Activated CD4-positive, alpha-beta memory T cell treated with anti-CD3 and anti-CD28 coated beads for 36 hours (primary cell): ENCODE measurements at regions of chr3 and their contacts with region 1.

Region 1: GRCh38 chr3:177197041-177197727 is at the start of gene TBL1XR1:
- DNase-seq: peak; percentile 89
- H3K4me3 Mint-ChIP-seq: peak within 1 kb of the TSS; percentile 90
- H3K27ac Mint-ChIP-seq: peak within 1 kb of the TSS; percentile 99
- H3K4me1 Mint-ChIP-seq: peaks cover 51% of the 10 kb centered on the region
- H3K27me3 Mint-ChIP-seq: no peaks in the 10 kb centered on the region
- total RNA-seq, gene TBL1XR1: 158 to 167 TPM

Region 2: DNA sequence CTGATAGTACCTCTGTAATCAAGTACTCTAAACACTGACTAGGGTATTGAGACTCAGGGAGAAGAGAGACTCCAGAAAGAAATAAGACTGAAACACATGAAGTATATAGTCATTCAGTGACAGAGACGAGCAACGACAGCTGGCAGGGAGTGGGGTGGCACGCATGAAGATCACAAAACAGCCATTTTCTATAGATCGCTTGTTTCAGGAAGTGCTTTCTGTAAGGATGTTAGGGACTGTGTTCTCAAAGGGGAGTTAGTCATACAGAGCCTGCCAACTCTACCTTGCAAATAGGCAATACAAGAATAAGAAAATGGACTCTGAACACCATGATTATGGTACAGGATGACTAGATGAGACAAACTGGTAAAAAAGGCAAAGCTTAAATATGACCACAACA is 139.4 kb before region 1 on chr3:
- CTCF ChIA-PET with region 1: no interaction called
- POLR2A ChIA-PET with region 1: interaction called, 6 read pairs
- intact Hi-C with region 1: loop called (anchors 1 kb)
- DNase-seq: peak; percentile 80
- H3K4me3 Mint-ChIP-seq: no peak overlapping the region
- H3K27ac Mint-ChIP-seq: no peak overlapping the region
- H3K4me1 Mint-ChIP-seq: peaks cover 39% of the 10 kb centered on the region
- H3K27me3 Mint-ChIP-seq: no peaks in the 10 kb centered on the region

Region 3: DNA sequence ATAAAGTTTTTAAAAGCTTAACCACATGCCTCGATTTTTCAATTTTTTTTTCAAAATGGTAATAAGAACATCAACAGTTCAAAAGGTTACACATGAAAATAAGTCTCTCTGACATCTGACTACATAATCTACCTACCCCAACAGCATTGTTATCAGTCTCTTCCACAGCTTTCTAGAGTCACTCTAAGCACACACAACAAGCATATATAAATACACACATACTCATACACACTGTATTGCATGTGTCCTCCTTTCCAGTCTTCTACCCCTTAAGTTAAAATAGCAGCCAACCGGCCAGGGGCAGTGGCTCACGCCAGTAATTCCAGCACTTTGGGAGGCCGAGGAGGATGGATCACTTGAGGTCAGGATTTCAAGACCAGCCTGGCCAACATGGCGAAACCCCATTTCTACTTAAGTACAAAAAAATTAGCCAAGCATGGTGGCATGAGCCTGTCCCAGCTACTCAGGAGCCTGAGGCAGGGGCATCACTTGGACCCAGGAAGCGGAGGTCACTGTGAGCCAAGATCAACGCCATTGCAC is 12.1 kb before region 1 on chr3:
- CTCF ChIA-PET with region 1: interaction called, 5 read pairs
- POLR2A ChIA-PET with region 1: interaction called, 5 read pairs
- intact Hi-C with region 1: loop called (anchors 1 kb)
- DNase-seq: no peak
- H3K4me3 Mint-ChIP-seq: no peak overlapping the region
- H3K27ac Mint-ChIP-seq: peak overlapping the region; percentile 35
- H3K4me1 Mint-ChIP-seq: peaks cover 62% of the 10 kb centered on the region
- H3K27me3 Mint-ChIP-seq: no peaks in the 10 kb centered on the region

Region 4: DNA sequence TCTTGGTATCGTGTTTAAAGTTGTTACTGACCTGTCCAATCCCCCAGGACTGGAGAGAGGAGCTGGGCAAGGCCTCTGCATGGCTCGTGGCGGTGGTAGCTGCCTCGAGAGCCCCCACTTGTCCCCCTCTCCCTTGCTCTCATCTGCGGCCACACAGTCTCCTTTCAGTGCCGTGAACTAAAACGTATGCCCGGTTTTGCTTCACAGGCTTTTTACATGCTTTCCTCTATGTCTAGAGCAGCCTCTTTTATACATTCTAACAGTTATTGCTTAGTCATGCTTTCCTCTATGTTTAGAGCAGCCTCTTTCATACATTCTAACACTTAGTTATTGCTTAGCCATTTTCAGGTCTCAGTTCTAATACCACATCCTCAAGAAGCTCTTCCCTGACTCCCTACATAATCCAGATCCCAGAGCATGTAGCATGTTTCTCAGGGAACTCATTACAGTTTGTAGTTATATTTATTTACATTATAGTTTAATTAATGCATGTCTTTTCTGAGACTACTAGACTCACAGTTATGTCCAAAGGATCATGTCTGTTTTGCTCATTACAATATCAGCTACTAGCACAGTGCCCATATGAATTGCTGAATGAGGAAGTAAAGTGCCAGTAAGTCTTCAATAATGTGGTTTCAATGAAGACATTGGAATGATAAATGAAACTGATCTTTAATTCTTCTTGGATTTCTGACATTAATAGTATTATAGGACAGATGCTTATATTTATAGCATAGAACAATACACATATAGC is 66.6 kb after region 1 on chr3:
- CTCF ChIA-PET with region 1: no interaction called
- POLR2A ChIA-PET with region 1: no interaction called
- intact Hi-C with region 1: no loop called
- DNase-seq: no peak
- H3K4me3 Mint-ChIP-seq: no peak overlapping the region
- H3K27ac Mint-ChIP-seq: no peak overlapping the region
- H3K4me1 Mint-ChIP-seq: no peaks in the 10 kb centered on the region
- H3K27me3 Mint-ChIP-seq: no peaks in the 10 kb centered on the region

Region 5: GRCh38 chr3:177314897-177315296 is 117.7 kb after region 1 on chr3:
- CTCF ChIA-PET with region 1: interaction called, 3 read pairs
- POLR2A ChIA-PET with region 1: interaction called, 4 read pairs
- intact Hi-C with region 1: loop called (anchors 2 kb)
- DNase-seq: peak; percentile 13
- H3K4me3 Mint-ChIP-seq: no peak overlapping the region
- H3K27ac Mint-ChIP-seq: peak overlapping the region; percentile 18
- H3K4me1 Mint-ChIP-seq: peaks cover 23% of the 10 kb centered on the region
- H3K27me3 Mint-ChIP-seq: peaks cover 2% of the 10 kb centered on the region

Region 6: GRCh38 chr3:177345049-177345972 is 148.1 kb after region 1 on chr3:
- CTCF ChIA-PET with region 1: interaction called, 4 read pairs
- POLR2A ChIA-PET with region 1: interaction called, 7 read pairs
- intact Hi-C with region 1: loop called (anchors 1 kb)
- DNase-seq: peak; percentile 86
- H3K4me3 Mint-ChIP-seq: peak overlapping the region; percentile 20
- H3K27ac Mint-ChIP-seq: peak overlapping the region; percentile 90
- H3K4me1 Mint-ChIP-seq: peaks cover 40% of the 10 kb centered on the region
- H3K27me3 Mint-ChIP-seq: no peaks in the 10 kb centered on the region

Region 7: GRCh38 chr3:177679568-177680441 is 482.6 kb after region 1 on chr3:
- CTCF ChIA-PET with region 1: no interaction called
- POLR2A ChIA-PET with region 1: no interaction called
- intact Hi-C with region 1: loop called (anchors 5 kb)
- DNase-seq: peak; percentile 64
- H3K4me3 Mint-ChIP-seq: no peak overlapping the region
- H3K27ac Mint-ChIP-seq: peak overlapping the region; percentile 69
- H3K4me1 Mint-ChIP-seq: peaks cover 21% of the 10 kb centered on the region
- H3K27me3 Mint-ChIP-seq: no peaks in the 10 kb centered on the region

Region 8: GRCh38 chr3:177816667-177817208 is 619.6 kb after region 1 on chr3:
- CTCF ChIA-PET with region 1: no interaction called
- POLR2A ChIA-PET with region 1: no interaction called
- intact Hi-C with region 1: no loop called
- DNase-seq: no peak
- H3K4me3 Mint-ChIP-seq: no peak overlapping the region
- H3K27ac Mint-ChIP-seq: no peak overlapping the region
- H3K4me1 Mint-ChIP-seq: peaks cover 7% of the 10 kb centered on the region
- H3K27me3 Mint-ChIP-seq: no peaks in the 10 kb centered on the region